Dendritic cell treated with granulocyte-macrophage colony-stimulating factor and Interleukin-4, amounts not matched to agents 40 ng/mL and 50 ng/mL, for 4 days (primary cell): ENCODE measurements at regions of chr12 and their contacts with region 1.

Region 1: DNA sequence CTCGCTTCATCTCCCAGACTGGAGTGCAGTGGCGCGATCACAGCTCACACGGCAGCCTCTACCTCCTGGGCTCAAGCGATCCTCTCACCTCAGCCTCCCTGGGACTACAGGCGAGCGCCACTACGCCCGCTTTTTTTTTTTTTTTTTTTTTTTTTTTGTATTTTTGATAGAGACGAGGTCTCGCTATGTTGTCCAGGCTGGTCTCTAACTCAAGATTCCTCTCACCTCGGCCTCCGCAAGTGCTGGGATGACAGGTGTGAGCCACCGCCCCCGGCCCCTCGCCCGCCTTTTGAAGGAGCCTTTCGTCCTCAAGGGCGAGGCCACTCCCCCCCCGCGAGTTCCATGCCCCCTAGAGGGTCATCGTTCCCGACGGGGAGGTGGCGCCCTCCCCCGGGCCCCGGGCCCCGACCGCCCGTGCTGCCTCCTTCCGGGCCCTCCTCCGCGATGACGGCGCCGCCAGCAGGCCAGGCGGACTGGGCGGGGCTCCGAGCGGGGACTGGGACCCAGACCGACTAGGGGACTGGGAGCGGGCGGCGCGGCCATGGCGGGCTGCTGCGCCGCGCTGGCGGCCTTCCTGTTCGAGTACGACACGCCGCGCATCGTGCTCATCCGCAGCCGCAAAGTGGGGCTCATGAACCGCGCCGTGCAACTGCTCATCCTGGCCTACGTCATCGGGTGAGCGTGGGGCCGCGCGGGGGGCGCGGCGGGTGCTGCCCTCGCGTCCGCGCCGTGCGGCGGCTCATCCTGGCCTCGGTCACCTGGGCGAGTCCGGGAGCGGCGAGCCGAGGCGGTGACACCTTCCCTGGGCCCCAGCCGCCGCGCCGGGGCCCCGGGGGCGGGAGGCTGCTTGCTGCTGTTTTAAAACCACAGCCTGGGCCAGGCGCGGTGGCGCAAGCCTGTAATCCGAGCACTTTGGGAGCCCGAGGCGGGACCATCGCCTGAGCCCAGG is at the start of gene P2RX4:
- H3K4me3 Mint-ChIP-seq: peak within 1 kb of the TSS; percentile 92
- H3K27ac Mint-ChIP-seq: peak within 1 kb of the TSS; percentile 96
- H3K4me1 Mint-ChIP-seq: peaks cover 44% of the 10 kb centered on the region
- H3K27me3 Mint-ChIP-seq: no peaks in the 10 kb centered on the region

Region 2: DNA sequence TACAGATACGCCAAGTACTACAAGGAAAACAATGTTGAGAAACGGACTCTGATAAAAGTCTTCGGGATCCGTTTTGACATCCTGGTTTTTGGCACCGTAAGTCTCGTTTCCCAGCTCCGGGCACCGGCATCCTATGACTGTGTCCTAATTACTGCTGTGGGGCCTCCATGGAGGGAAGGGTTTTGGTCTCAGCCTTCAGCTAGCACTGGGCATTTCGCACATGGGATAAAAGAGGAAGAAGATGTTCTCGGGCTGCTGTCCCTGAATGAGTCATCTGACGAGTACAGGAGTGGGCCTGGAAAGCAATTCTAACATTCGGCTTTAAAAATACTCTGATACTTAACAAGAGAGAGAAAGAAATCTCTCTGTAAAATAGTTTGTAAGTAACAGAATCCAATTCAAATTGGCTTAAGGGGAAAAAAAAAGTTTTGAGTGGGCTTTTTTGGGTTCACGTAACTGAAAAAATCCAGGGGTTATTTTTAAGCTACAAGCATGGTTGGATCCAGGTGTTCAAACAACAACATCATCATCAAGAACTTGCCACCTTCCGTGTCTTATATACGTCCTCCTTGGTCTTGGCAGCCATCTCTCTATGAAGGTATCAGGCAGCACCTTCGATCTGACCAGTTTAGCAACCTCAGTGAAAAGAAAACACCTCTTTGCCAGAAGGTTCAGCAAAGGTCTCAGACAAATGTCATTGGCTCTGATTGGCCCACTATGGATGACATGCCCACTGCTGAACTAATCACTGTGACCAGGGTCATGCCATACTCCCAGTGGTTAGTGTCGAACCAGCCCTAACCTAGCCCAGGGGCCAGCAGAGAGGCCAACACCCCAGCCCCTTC is 34.3 kb before region 1 on chr12:
- intact Hi-C with region 1: loop called (anchors 5 kb)
- H3K4me3 Mint-ChIP-seq: no peak overlapping the region
- H3K27ac Mint-ChIP-seq: peak overlapping the region; percentile 76
- H3K4me1 Mint-ChIP-seq: peaks cover 38% of the 10 kb centered on the region
- H3K27me3 Mint-ChIP-seq: no peaks in the 10 kb centered on the region